K562 (cell line): ENCODE measurements at regions of chr14 and their contacts with region 1.

Region 1: DNA sequence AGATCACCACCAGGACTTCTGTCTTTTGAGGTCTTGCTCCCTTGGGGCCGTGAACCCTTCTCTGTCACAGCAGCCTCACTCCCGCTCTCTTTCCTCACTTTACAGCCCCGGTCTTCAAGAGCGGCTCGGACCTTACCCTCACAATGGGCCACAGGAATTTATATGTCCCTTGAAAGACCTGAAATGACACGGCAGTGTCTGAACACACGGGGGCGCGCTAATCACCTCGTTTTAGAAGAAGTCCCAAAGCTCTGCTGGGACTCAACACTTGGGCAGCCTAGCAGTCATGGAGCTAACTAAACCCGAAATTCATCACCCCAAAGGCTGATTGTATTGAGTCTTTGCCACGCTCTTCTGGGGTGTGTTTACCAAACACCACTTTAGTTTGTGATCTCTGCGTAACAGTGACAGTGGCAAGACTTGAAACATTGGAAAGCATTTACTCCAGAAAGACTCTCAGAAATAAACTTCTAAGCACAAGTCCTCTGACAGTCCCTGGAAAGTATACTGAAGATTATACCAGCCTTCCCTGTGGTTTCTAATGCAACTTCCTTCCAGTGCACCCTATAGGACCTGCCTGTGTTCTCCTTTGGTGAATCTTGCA is 29.0 kb downstream of the SERPINA11 start:
- DNase-seq: peak; percentile 18 to 65 (median 36)
- ATAC-seq: peak; percentile 87
- H3K4me3 ChIP-seq: no peak overlapping the region
- H3K27ac ChIP-seq: no peak overlapping the region
- H3K4me1 ChIP-seq: no peaks in the 10 kb centered on the region
- H3K27me3 ChIP-seq: no peaks in the 10 kb centered on the region
- CTCF ChIP-seq: peak; percentile 54 to 69 (median 55)
- EP300 ChIP-seq: no peak
- POLR2A ChIP-seq: no peak
- RAD21 ChIP-seq: peak in 1 of 2 experiments; percentile 46; a peak in 2 of 4 replicates

Region 2: GRCh38 chr14:94485944-94486841 is 62.6 kb after region 1 on chr14:
- CTCF ChIA-PET with region 1: no interaction called
- POLR2A ChIA-PET with region 1: no interaction called
- in situ Hi-C with region 1: no loop called
- intact Hi-C with region 1: loop called (anchors 2 kb)
- DNase-seq: peak; percentile 16 to 71 (median 61)
- ATAC-seq: peak; percentile 85
- H3K4me3 ChIP-seq: no peak overlapping the region
- H3K27ac ChIP-seq: no peak overlapping the region
- H3K4me1 ChIP-seq: no peaks in the 10 kb centered on the region
- H3K27me3 ChIP-seq: peaks cover 0 to 8% of the 10 kb centered on the region in 2 experiments; a peak in 1 of 5 replicates
- CTCF ChIP-seq: peak; percentile 70 to 88 (median 79)
- EP300 ChIP-seq: no peak
- POLR2A ChIP-seq: no peak
- RAD21 ChIP-seq: peak; percentile 31 to 63; a peak in 3 of 4 replicates

Region 3: DNA sequence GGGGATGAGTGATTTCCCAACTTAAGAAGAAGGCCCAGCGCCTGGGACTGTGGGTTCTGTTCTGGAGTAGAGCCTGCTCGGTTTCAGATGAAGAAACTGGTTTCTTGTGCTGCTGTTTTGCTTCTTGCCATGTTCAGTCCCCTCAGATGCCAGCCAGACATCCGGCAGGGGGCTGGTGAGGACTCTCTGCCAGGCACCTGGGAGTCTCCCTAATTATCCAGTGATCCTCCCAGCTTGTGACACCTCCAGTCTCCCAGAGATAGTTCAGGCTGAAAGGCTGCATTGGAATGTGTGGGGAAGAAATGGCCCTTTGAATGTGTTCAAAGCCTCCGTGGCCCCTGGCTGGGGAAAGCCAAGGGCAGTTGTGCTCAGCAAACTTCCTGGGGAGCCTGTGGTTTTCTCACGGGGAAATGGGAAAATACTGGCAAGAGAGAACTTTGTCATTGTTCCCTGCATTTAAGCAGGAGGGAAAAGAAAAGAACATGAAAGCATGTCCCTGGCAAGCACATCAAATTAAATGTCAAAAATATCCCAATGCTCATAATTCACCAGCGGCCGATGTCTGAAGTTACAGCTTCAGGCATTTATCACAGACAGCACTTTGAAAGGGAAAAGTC is 94.2 kb after region 1 on chr14:
- CTCF ChIA-PET with region 1: no interaction called
- POLR2A ChIA-PET with region 1: no interaction called
- in situ Hi-C with region 1: no loop called
- intact Hi-C with region 1: no loop called
- DNase-seq: no peak
- ATAC-seq: no peak
- H3K4me3 ChIP-seq: no peak overlapping the region
- H3K27ac ChIP-seq: no peak overlapping the region
- H3K4me1 ChIP-seq: no peaks in the 10 kb centered on the region
- H3K27me3 ChIP-seq: no peaks in the 10 kb centered on the region; a peak in 1 of 5 replicates
- CTCF ChIP-seq: no peak
- EP300 ChIP-seq: no peak
- POLR2A ChIP-seq: no peak
- RAD21 ChIP-seq: no peak

Region 4: DNA sequence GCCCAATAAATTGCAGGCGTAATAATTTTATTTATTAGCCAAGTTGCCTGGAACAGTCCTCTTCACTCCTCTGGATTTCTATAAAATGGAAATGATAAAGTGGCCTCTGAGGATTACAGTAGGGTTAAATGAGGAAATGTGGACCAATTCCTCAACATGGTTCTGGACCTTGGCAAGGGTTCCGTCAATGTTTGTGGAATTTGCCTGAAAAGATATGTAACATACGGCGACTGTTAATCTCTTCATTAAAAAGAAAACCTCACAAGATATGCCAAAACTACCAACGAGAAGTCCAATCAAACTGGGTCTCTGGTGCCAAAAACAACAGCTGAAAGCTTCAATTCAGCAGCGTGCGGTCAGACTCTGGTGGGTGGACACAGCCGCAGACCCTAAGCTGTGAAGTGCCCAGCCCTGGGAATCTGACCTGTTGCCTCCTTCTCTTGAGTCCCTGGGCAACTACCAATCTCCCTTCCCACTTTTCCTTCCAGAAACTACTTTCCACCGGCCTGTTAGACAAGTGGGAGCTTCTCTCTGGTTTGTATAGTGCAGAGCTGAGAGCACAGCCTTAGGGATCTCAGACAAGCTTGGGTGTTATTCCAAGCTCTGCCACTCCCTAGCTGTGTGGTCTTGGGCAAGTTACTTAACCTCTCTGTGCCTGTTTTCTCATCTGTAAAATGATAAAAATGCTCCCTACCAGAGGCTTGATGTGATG is 536.9 kb after region 1 on chr14:
- CTCF ChIA-PET with region 1: no interaction called
- POLR2A ChIA-PET with region 1: no interaction called
- in situ Hi-C with region 1: no loop called
- intact Hi-C with region 1: no loop called
- DNase-seq: no peak
- ATAC-seq: no peak
- H3K4me3 ChIP-seq: no peak overlapping the region
- H3K27ac ChIP-seq: no peak overlapping the region
- H3K4me1 ChIP-seq: no peaks in the 10 kb centered on the region
- H3K27me3 ChIP-seq: no peaks in the 10 kb centered on the region; a peak in 1 of 5 replicates
- CTCF ChIP-seq: no peak
- EP300 ChIP-seq: no peak
- POLR2A ChIP-seq: no peak
- RAD21 ChIP-seq: no peak